Mammary epithelial cell (primary cell): ENCODE measurements at regions of chr5 and their contacts with region 1.

Region 1: GRCh38 chr5:100311807-100312206 is 223.4 kb upstream of the FAM174A start:
- DNase-seq: no peak
- H3K4me3 ChIP-seq: no peak overlapping the region
- H3K27ac ChIP-seq: no peak overlapping the region
- H3K4me1 ChIP-seq: no peaks in the 10 kb centered on the region
- H3K27me3 ChIP-seq: no peaks in the 10 kb centered on the region
- CTCF ChIP-seq: no peak

Region 2: GRCh38 chr5:100213483-100213882 is 98.3 kb before region 1 on chr5:
- CTCF ChIA-PET with region 1: interaction called, 12 read pairs
- dilution Hi-C with region 1: no loop called
- in situ Hi-C with region 1: no loop called
- intact Hi-C with region 1: no loop called
- DNase-seq: no peak
- H3K4me3 ChIP-seq: no peak overlapping the region
- H3K27ac ChIP-seq: no peak overlapping the region
- H3K4me1 ChIP-seq: no peaks in the 10 kb centered on the region
- H3K27me3 ChIP-seq: no peaks in the 10 kb centered on the region
- CTCF ChIP-seq: no peak

Region 3: DNA sequence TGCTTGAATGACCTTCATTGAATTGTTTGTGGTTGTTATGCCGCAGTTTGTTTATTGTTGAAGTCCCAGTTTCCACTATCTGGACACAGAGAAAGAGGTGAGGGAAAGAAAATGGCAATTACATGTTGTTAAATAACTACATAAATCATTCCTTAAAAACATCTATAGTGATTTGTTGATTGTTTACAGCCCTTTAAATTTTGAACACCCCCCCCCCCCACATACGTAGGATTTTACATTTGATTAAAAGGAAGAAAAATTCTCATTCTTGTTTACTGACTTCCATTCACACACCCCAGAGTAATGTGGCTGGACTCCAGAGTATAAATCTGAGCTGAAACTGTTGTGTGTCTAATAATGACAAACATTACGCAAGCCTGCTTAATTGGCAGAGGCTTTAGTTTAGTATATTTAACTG is 136.3 kb after region 1 on chr5:
- CTCF ChIA-PET with region 1: no interaction called
- dilution Hi-C with region 1: no loop called
- in situ Hi-C with region 1: no loop called
- intact Hi-C with region 1: no loop called
- DNase-seq: no peak
- H3K4me3 ChIP-seq: no peak overlapping the region
- H3K27ac ChIP-seq: no peak overlapping the region
- H3K4me1 ChIP-seq: no peaks in the 10 kb centered on the region
- H3K27me3 ChIP-seq: no peaks in the 10 kb centered on the region
- CTCF ChIP-seq: no peak